ENCODE measurements at regions of chr16 and their contacts with region 1.

Region 1: GRCh38 chr16:89241187-89242007 is 23.9 kb downstream of the ZNF778 start:
- DNase-seq: peak; percentile 45 to 84 (median 72)
- H3K4me3 ChIP-seq: peak overlapping the region; percentile 60 to 96 (median 85)
- H3K27ac ChIP-seq: peak overlapping the region; percentile 66 to 97 (median 93)
- H3K27me3 ChIP-seq: no peaks in the 10 kb centered on the region
- CTCF ChIP-seq: peak in 1 of 56 donors; percentile 23

Region 2: DNA sequence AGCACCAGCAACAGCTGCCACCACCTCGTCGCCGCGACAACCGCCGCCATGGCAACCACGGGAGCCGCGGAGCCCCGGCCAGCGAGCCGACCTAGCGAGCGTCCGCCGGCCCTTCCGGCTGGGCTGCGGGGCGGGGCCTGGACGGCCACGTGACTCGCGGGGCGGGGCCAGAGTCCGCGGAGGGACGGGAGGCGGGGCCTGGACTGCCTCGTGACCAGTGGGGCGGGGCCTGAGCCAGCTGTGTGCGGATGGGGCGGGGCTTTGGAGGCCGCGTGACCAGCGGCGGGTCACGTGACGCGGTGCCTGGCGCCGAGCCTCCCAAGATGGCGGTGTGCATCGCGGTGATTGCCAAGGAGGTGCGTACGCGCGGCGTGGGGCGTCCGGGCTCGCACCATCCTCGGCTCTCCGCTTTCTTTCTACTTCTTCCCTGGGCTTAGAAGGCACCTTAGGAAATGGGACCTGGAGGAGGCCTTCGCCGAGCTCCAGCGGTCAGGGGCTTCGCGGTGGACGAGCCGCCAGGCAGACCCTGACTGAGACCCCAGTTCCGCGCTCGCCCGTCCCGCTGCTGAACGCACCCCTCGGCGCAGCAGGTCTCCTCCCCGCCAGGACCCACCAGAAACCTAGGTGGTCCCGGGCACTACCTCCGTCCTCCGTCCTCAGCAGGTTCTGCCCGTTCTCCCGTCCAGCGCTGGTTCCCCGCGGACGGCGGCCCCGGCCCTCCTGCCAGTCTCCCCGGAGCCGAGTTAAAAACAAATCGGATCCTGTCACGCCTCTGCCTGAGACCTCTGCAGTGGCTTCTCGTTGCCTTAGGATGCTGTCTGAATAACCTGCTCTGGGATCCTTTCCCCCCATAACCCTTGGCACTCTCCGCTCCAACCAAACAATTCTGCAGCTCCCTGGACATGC is 384.3 kb before region 1 on chr16 and contains the starts of genes GALNS and TRAPPC2L:
- intact Hi-C with region 1: no loop called
- DNase-seq: peak; percentile 98 to 100 (median 99)
- H3K4me3 ChIP-seq: peak within 1 kb of the TSS; percentile 66 to 100 (median 97)
- H3K27ac ChIP-seq: peak within 1 kb of the TSS; percentile 85 to 100 (median 97)
- H3K27me3 ChIP-seq: no peaks in the 10 kb centered on the region
- CTCF ChIP-seq: peak in 8 of 56 donors; percentile 6 to 30 (median 10)
- total RNA-seq, gene GALNS: 22.5 to 60.1 (median 36.3) TPM
- total RNA-seq, gene TRAPPC2L: 30.9 to 83.9 (median 57.9) TPM

Region 3: GRCh38 chr16:89217388-89218191 is 23.8 kb before region 1 on chr16 and contains the start of gene ZNF778:
- intact Hi-C with region 1: loop called in 1 of 2 experiments (anchors 1 kb)
- DNase-seq: peak; percentile 70 to 90 (median 82)
- H3K4me3 ChIP-seq: peak within 1 kb of the TSS; percentile 60 to 100 (median 93)
- H3K27ac ChIP-seq: peak within 1 kb of the TSS; percentile 41 to 98 (median 92)
- H3K27me3 ChIP-seq: no peaks in the 10 kb centered on the region
- CTCF ChIP-seq: peak in 32 of 56 donors; percentile 10 to 51 (median 29)
- total RNA-seq, gene ZNF778: 10.1 to 35.3 (median 17.7) TPM

Region 4: GRCh38 chr16:89289428-89290395 is 48.3 kb after region 1 on chr16:
- intact Hi-C with region 1: loop called in 1 of 2 experiments (anchors 2 kb)
- DNase-seq: peak in 9 of 10 donors; percentile 63 to 81 (median 71)
- H3K4me3 ChIP-seq: no peak overlapping the region
- H3K27ac ChIP-seq: peak overlapping the region in 9 of 59 donors; percentile 1 to 46 (median 12)
- H3K27me3 ChIP-seq: no peaks in the 10 kb centered on the region
- CTCF ChIP-seq: peak; percentile 42 to 91 (median 78)

Region 5: GRCh38 chr16:89431158-89431584 is 189.8 kb after region 1 on chr16:
- intact Hi-C with region 1: no loop called
- DNase-seq: peak in 3 of 10 donors; percentile 42 to 66 (median 56)
- H3K4me3 ChIP-seq: peak overlapping the region in 2 of 59 donors; percentile 8 to 27
- H3K27ac ChIP-seq: no peak overlapping the region
- H3K27me3 ChIP-seq: no peaks in the 10 kb centered on the region
- CTCF ChIP-seq: no peak

Region 6: GRCh38 chr16:89490387-89491237 is 249.2 kb after region 1 on chr16 and contains the start of gene ANKRD11:
- intact Hi-C with region 1: loop called in 1 of 2 experiments (anchors 5 kb)
- DNase-seq: peak; percentile 99 to 100 (median 100)
- H3K4me3 ChIP-seq: peak within 1 kb of the TSS; percentile 59 to 100 (median 93)
- H3K27ac ChIP-seq: peak within 1 kb of the TSS in 58 of 59 donors; percentile 5 to 96 (median 87)
- H3K27me3 ChIP-seq: no peaks in the 10 kb centered on the region
- CTCF ChIP-seq: peak in 26 of 56 donors; percentile 6 to 57 (median 22)
- total RNA-seq, gene ANKRD11: 131 to 216 (median 167) TPM

Region 7: GRCh38 chr16:89507834-89508590 is 266.6 kb after region 1 on chr16 and contains the start of gene SPG7:
- intact Hi-C with region 1: loop called in 1 of 2 experiments (anchors 5 kb)
- DNase-seq: peak; percentile 60 to 93 (median 75)
- H3K4me3 ChIP-seq: peak within 1 kb of the TSS; percentile 66 to 100 (median 94)
- H3K27ac ChIP-seq: peak within 1 kb of the TSS; percentile 32 to 95 (median 87)
- H3K27me3 ChIP-seq: no peaks in the 10 kb centered on the region
- CTCF ChIP-seq: peak in 23 of 56 donors; percentile 3 to 56 (median 36)
- total RNA-seq, gene SPG7: 115 to 276 (median 151) TPM

Region 8: GRCh38 chr16:89657442-89658220 is 416.2 kb after region 1 on chr16 and contains the starts of genes CHMP1A and SPATA33:
- intact Hi-C with region 1: loop called in 1 of 2 experiments (anchors 5 kb)
- DNase-seq: peak; percentile 79 to 96 (median 86)
- H3K4me3 ChIP-seq: peak within 1 kb of the TSS; percentile 72 to 100 (median 97)
- H3K27ac ChIP-seq: peak within 1 kb of the TSS in 54 of 59 donors; percentile 8 to 92 (median 78)
- H3K27me3 ChIP-seq: no peaks in the 10 kb centered on the region
- CTCF ChIP-seq: peak in 14 of 56 donors; percentile 10 to 51 (median 21)
- total RNA-seq, gene CHMP1A: 59.2 to 89.8 (median 72.3) TPM
- total RNA-seq, gene SPATA33: 14.5 to 39.6 (median 23.2) TPM